BJ (cell line): ENCODE measurements at regions of chr17 and their contacts with region 1.

Region 1: DNA sequence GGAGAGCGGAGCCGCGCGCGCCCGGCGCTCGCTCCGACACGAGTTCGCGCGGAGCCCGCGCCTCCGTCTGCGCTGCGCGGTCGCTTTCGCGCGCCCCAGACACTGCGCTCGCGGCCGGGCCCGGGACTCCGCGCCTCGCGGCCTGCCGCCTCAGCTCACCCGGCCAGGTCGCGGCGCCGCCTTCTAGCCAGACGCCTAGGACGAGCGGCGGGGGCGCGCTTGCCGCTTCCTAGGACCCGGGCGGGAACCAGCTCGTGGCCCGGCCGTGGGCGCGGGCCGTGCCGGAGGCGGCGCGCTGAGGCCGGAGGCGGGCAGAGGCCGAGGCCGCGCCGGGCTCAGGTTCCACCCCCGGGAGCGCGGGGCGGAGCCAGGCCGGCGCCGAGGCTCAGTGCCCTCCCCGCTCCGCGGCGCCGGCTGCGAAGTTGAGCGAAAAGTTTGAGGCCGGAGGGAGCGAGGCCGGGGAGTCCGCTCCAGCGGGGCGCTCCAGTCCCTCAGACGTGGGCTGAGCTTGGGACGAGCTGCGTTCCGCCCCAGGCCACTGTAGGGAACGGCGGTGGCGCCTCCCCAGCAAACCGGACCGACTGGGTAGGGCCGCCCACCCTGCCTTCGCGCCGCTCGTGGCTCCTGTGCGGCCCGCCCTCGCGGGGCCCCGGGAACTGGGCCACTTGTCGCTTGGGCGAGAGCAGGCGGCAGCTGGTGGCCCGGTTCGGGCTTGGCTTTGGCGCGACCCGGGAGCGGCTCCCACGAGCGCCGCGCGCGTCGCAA is at the start of gene SPHK1:
- DNase-seq: no peak
- H3K4me3 ChIP-seq: peak within 1 kb of the TSS; percentile 76
- H3K27me3 ChIP-seq: no peaks in the 10 kb centered on the region
- CTCF ChIP-seq: no peak
- polyA plus RNA-seq, gene SPHK1: 21.4 and 57.8 TPM in 2 replicates

Region 2: DNA sequence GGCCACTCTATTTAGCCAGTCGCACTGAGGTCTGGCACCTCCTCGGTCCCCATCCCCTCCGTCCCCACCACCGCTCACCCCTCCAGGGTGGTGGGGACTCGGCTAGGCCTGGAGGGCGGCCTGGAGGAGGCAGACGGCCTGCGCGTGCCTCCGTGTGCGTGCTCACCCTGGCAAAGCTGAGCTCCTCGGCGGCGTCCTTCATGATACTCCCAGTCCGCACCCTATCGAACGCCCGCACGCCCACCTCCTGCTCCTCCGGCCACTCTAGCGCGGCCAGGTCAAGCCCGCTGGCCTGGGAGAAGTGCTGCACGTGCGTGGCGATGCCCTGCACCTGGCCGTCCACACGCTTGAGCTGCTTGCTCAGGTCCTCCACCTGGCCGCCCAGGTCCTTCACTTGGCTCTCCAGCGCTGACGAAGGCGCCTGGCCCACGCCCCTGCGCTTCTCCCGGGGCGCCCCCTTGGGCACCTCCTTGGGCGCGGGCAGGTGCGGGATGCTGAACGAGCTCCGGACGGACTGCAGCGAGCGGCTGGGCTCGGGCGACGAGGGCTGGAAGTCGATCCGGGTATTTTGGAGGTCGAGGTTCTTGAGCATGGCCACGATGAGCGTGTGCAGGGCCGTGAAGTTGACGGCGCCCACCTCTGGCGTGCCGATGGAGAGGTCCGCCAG is 77.0 kb before region 1 on chr17:
- CTCF ChIA-PET with region 1: interaction called, 86 read pairs
- POLR2A ChIA-PET with region 1: no interaction called
- DNase-seq: no peak
- H3K4me3 ChIP-seq: no peak overlapping the region
- H3K27me3 ChIP-seq: no peaks in the 10 kb centered on the region
- CTCF ChIP-seq: no peak

Region 3: GRCh38 chr17:76353599-76354316 is 30.6 kb before region 1 on chr17 and contains the start of gene PRPSAP1:
- CTCF ChIA-PET with region 1: interaction called, 27 read pairs
- POLR2A ChIA-PET with region 1: interaction called, 3 read pairs
- DNase-seq: no peak
- H3K4me3 ChIP-seq: peak within 1 kb of the TSS; percentile 93
- H3K27me3 ChIP-seq: no peaks in the 10 kb centered on the region
- CTCF ChIP-seq: peak; percentile 80
- polyA plus RNA-seq, gene PRPSAP1: 68.5 and 72.8 TPM in 2 replicates

Region 4: GRCh38 chr17:76365256-76365903 is 19.0 kb before region 1 on chr17:
- CTCF ChIA-PET with region 1: interaction called, 36 read pairs
- POLR2A ChIA-PET with region 1: no interaction called
- DNase-seq: no peak
- H3K4me3 ChIP-seq: no peak overlapping the region
- H3K27me3 ChIP-seq: no peaks in the 10 kb centered on the region
- CTCF ChIP-seq: peak; percentile 47

Region 5: DNA sequence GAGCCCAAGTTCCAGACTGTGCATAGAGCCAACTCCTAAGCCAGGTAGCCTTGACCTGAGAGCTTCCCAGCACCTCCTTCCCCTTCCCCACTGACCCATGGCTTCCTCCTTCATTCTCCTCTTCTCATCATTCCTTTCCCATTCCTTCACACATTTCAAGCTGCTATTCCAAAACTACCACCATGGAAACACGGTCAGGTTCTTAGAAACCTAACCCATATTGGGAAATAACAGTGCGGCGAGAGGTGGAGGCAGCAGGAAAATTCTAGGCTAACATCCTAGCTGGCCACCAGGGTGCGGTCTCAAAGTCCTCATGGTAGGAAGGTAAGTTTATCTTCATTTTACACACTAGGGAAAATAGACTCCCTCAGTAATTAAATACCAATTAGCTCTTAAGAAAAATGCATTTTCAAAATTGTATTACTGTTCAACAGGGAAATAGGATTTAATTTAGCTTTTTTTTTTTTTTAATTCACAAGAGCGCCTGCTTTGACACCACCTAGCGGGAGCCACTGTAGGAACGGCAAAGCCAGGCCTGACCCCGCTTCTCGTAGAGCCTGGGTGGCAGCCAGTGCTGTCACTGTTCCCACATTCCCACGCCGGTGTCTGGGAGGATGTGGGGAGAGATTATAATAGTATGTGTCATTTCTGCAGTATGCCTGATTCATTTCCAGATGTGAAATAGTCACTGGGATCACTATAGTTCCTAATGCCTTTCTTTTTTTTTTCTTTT is 14.0 kb before region 1 on chr17:
- CTCF ChIA-PET with region 1: interaction called, 36 read pairs
- POLR2A ChIA-PET with region 1: no interaction called
- DNase-seq: peak; percentile 95
- H3K4me3 ChIP-seq: no peak overlapping the region
- H3K27me3 ChIP-seq: no peaks in the 10 kb centered on the region
- CTCF ChIP-seq: peak; percentile 63

Region 6: DNA sequence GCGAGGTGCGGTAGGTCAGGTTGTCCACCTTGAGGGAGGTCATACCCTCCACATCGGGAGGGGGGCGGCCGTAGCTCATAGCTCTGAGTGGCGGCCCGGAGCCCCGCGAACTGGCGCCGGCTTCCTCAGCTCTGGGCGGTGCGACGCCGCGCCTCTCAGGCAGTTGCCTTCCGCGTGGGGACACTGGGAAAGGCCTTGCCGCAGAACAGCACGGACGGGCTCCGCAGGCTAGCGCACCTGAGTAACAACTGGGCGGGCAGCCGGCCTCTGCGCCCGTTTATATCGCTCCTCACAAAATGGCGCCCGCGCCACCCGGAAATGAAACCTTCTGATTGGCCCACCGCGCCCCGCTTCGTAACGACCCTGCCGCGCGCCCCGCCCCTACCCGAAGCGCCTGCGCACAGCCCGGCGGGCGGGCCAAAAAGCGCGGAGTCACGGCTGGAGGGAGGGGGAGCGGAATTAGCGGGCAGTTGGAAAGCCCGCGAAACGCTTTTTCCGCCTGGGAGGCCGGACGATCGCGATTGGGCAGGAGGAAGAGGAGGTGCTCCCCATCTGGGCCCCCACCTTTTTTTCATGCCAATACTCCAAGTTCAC is 352.8 kb after region 1 on chr17 and contains the start of gene SRSF2:
- CTCF ChIA-PET with region 1: no interaction called
- POLR2A ChIA-PET with region 1: no interaction called
- DNase-seq: peak; percentile 85
- H3K4me3 ChIP-seq: peak within 1 kb of the TSS; percentile 100
- H3K27me3 ChIP-seq: no peaks in the 10 kb centered on the region
- CTCF ChIP-seq: no peak
- polyA plus RNA-seq, gene SRSF2: 110 and 130 TPM in 2 replicates